ENCODE measurements at regions of chr20 and their contacts with region 1.

Region 1: DNA sequence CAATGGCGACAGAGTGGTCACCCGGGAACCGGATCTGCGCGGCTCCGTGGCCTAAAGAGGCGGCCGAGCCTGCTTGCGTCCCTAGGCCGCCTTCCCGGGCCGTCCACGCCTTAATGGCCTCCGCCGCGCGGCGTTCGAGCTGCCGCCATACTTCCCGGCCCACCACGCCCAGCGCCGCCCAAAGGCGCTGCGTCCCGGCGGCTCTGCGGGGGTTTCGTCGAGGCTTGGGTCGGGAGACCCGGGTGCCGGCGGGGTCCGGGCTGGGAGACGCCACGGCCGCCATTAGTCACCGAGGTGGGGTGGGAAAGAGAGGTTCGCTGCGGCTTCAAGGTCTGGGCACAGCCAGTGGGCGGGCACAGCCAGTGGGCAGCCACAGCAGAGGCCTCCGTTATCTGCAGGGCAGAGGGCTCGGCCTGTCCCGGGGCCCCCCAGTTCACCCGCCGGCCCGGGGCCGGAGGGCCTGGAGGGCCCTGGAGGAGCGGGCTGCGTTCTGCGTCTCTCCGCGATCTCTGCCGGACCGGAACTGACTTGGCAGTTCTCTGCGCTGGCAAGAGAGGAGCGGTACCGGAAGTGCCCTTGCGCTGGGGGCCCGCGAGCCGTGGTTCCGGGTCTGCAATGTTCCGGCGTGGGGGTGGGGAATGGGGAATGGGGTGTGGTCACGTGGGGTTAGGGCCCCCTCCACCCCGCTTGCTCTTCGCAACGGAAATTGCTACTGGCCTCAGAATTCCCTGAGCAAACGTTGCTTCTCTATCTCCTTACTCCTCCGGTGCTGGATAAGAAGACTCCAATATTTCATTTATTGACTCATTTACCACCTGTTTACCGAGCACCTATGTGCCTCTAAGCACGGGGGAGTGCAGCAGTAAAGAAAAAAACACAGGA is 82.3 kb downstream of the CNBD2 start:
- DNase-seq: peak; percentile 93
- ATAC-seq: peak; percentile 99

Region 2: GRCh38 chr20:36093025-36093803 is 42.5 kb after region 1 on chr20:
- intact Hi-C with region 1: loop called (anchors 5 kb)
- DNase-seq: peak; percentile 84
- ATAC-seq: peak; percentile 41

Region 3: GRCh38 chr20:36624068-36624943 is 573.6 kb after region 1 on chr20:
- intact Hi-C with region 1: no loop called
- DNase-seq: no peak
- ATAC-seq: peak; percentile 86